CD8-positive, alpha-beta T cell (primary cell): ENCODE measurements at regions of chr9 and their contacts with region 1.

Region 1: DNA sequence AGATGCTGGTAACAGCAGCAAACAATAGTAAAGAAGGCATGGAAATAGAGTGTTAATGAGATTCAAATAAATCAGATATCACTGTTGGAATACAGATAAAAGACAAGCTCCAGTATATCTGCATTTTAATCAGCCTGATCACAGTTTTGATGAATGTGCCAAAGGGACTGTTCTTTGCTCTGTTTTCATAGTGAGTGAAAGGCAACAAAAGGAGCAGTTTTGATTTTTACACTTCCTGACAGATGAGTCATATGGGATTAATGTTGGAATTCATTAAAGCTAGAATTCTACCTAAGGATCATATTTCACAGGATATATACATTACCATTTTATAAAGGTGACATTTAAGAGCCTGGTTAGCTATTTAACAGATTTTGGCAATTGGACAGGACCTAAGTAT is 743.3 kb upstream of the PTPRD start:
- DNase-seq: no peak
- ATAC-seq: no peak
- H3K4me3 ChIP-seq: no peak overlapping the region
- H3K4me3 Mint-ChIP-seq: no peak overlapping the region
- H3K27ac ChIP-seq: no peak overlapping the region
- H3K27ac Mint-ChIP-seq: no peak overlapping the region
- H3K4me1 ChIP-seq: no peaks in the 10 kb centered on the region
- H3K4me1 Mint-ChIP-seq: no peaks in the 10 kb centered on the region
- H3K27me3 ChIP-seq: no peaks in the 10 kb centered on the region
- H3K27me3 Mint-ChIP-seq: no peaks in the 10 kb centered on the region
- CTCF ChIP-seq: no peak

Region 2: DNA sequence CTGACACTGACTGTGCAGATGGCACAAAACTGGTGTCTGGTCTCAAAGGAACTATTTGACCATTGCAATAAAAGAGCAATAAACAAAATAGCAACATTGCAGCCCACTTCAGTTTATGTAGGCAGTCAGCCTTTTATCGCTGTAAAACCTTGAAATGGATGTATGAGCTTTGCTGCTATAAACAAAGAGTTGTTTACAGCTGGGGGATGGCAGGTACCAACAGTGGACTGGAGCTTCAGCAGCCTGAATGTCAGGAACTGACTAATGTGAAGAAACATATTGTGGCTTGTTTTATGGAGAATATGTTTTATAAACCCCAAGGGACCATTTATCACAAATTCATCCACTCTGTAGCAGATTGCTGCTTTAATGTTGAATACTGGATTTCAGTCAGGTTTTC is 821.2 kb before region 1 on chr9:
- CTCF ChIA-PET with region 1: no interaction called
- POLR2A ChIA-PET with region 1: no interaction called
- intact Hi-C with region 1: loop called in 1 of 2 experiments (anchors 5 kb)
- DNase-seq: no peak
- ATAC-seq: no peak
- H3K4me3 ChIP-seq: no peak overlapping the region
- H3K4me3 Mint-ChIP-seq: no peak overlapping the region
- H3K27ac ChIP-seq: no peak overlapping the region
- H3K27ac Mint-ChIP-seq: no peak overlapping the region
- H3K4me1 ChIP-seq: no peaks in the 10 kb centered on the region
- H3K4me1 Mint-ChIP-seq: no peaks in the 10 kb centered on the region
- H3K27me3 ChIP-seq: no peaks in the 10 kb centered on the region
- H3K27me3 Mint-ChIP-seq: no peaks in the 10 kb centered on the region
- CTCF ChIP-seq: no peak